ENCODE measurements at regions of chr13 and their contacts with region 1.

Region 1: DNA sequence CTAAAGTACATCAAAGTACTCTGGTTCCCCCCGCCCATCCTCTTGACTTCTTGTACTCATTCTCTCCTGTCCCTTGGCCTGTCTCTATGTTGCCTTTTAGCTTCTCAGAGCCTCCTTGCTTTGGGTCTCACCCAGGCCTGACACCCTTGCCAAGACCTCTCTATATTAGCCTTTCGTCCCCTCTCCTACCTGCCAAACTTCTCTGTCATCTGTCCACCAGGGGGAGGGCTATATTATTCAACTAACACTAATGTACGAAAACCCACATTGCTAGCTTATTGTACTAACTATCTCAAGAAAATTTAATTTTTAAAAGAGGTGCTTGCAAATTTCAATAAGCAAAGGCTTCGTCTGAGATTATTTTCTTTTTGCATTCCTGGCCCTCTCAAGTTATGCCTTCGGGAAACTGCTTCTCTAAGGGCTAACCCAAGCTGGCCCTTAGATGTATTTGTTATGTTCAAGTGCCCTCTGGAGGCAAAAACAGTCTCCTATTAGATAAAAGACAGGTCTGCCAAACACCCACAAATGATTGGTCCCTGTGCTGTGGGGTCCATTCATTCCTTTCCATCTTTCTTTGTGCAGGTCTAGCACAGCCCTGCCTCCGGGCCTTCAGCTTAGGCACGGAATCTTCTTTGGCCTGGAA is 6.3 kb upstream of the MRPS31 start:
- DNase-seq: peak; percentile 44
- H3K4me3 ChIP-seq: no peak overlapping the region
- H3K27ac ChIP-seq: no peak overlapping the region
- H3K4me1 ChIP-seq: no peaks in the 10 kb centered on the region
- H3K27me3 ChIP-seq: no peaks in the 10 kb centered on the region
- CTCF ChIP-seq: peak; percentile 38 to 77 (median 73)
- POLR2A ChIP-seq: no peak

Region 2: DNA sequence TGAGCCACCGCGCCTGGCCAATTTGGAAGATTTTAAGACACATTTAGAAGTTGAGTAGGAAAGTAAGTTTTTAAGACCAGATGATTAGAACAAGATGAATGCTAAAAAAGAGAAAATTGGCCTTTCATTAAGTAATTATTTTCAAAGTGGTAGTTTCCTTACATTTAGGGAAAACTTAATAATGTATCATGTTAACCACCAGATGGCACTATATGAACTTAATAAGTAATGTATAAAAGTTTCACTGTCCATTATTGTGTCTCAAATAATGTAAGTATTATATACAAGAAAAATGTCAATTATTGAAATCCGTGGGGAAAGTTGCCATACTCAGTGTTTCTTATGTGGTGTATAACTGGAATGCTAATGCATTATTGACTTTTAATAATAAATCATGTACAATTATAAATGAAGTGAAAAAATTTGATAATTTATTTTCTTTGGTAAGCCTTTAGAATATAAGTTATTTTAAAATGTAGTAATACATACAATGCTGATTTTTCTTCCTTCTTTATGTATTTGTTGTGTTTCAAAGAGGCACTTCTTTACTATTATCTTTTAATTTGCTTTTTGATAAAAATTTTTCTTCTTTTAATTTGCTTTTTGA is 1092.7 kb before region 1 on chr13:
- intact Hi-C with region 1: loop called (anchors 5 kb)
- DNase-seq: no peak
- H3K4me3 ChIP-seq: no peak overlapping the region
- H3K27ac ChIP-seq: no peak overlapping the region
- H3K4me1 ChIP-seq: no peaks in the 10 kb centered on the region
- H3K27me3 ChIP-seq: no peaks in the 10 kb centered on the region
- CTCF ChIP-seq: peak in 3 of 4 experiments; percentile 38 to 41 (median 39)
- POLR2A ChIP-seq: no peak

Region 3: DNA sequence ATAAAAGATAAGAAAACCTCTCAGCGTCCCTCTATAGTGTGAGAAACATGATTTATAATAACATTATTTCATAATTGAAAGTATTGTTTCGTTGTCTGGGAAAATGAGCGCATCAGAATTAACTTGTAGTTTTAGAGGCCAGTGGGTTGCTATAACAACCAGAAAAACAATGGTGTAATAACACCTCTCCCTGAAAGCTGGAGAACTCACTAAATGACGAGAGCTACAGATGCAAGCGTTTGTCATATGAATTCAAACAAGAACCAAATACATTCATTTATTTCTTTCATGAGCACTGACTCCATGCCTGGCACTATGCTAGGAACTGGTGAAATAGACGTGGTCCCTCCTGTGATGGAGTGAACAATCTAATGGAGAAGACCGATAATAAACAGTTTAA is 400.8 kb after region 1 on chr13:
- intact Hi-C with region 1: no loop called
- DNase-seq: no peak
- H3K4me3 ChIP-seq: no peak overlapping the region
- H3K27ac ChIP-seq: no peak overlapping the region
- H3K4me1 ChIP-seq: no peaks in the 10 kb centered on the region
- H3K27me3 ChIP-seq: no peaks in the 10 kb centered on the region
- CTCF ChIP-seq: no peak
- POLR2A ChIP-seq: no peak

Measured in prostate gland (tissue), 2 donors.